ENCODE measurements at regions of chr5 and their contacts with region 1.

Region 1: GRCh38 chr5:103224118-103224893 is 34.3 kb upstream of the MACIR start:
- DNase-seq: peak; percentile 46 to 80 (median 66)
- ATAC-seq: peak; percentile 96
- H3K4me3 ChIP-seq: no peak overlapping the region
- H3K27ac ChIP-seq: no peak overlapping the region
- H3K4me1 ChIP-seq: peaks cover 3 to 5% of the 10 kb centered on the region in 2 experiments; a peak in 2 of 5 replicates
- H3K27me3 ChIP-seq: no peaks in the 10 kb centered on the region
- CTCF ChIP-seq: peak; percentile 68 to 84 (median 84)
- EP300 ChIP-seq: no peak
- POLR2A ChIP-seq: no peak
- RAD21 ChIP-seq: peak; percentile 72 to 87

Region 2: DNA sequence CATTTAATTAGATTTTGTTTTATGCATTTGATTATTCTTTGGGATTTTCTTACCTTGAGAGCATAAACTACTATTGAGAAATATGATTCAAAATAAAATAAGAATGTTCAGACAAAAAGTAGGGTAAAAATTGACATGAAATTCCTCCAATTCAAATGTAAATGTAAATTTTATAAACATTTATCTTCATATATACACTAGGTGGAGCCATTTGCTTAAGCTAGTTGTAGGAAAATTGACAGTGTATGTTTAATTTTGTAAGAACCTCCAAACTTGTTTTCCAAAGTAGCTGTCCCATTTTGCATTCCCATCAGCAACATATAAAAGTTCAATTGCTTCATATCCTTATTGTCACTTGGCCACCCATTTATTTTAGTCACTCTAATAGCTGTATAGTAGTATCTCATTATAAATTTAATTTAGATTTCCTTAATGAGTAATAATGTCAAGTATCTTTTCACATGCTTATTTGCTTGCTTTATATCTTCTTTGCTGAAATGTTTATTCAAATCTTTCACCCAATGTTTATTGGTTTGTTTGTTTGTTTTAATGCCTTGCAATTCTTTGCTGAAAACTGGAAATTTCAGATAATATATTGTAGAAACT is 687.9 kb before region 1 on chr5:
- CTCF ChIA-PET with region 1: no interaction called
- POLR2A ChIA-PET with region 1: interaction called, 3 read pairs
- in situ Hi-C with region 1: loop called (anchors 10 kb)
- intact Hi-C with region 1: loop called (anchors 1 kb)
- DNase-seq: no peak
- ATAC-seq: no peak
- H3K4me3 ChIP-seq: no peak overlapping the region
- H3K27ac ChIP-seq: no peak overlapping the region
- H3K4me1 ChIP-seq: no peaks in the 10 kb centered on the region
- H3K27me3 ChIP-seq: no peaks in the 10 kb centered on the region
- CTCF ChIP-seq: peak in 1 of 3 experiments; percentile 45; a peak in 2 of 6 replicates
- EP300 ChIP-seq: no peak
- POLR2A ChIP-seq: no peak
- RAD21 ChIP-seq: peak; percentile 42 to 47

Region 3: DNA sequence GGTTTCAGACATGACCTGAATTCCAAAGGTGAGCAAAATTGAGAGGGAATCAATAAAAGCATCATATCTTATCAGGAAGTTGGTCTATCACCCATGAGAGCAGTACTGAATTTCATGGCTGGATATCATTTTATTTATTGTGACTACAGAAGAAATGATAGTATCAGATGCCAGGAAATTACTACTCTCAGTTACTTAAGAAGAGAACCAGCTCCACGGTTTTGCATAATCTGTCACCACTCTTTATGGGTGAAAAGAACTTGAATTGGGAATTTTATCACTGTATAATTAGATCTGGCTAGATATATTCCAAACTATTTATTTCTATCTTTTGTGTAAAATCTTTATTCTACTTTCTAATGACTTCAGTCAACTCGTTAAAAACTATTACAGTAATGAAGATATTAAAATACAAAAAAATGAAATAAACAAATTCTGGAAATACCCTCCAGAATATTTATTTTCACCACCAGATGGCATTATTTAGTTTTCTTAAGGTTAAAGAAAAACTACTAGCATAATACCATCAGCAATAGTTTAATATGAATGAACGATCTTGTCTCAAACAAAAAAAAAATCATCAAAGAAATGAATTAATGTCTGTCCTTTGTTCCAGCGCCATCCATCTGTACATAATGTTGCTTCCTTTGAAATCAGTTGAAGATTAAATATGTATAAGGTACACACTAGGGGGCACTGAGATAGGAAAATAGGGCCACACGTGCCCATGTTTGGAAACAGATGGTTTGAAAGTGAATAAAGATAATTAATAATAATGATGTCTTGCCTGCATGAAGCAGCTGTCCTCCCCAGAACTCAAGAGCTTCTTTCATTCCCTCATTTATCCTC is 640.8 kb before region 1 on chr5:
- CTCF ChIA-PET with region 1: no interaction called
- POLR2A ChIA-PET with region 1: no interaction called
- in situ Hi-C with region 1: no loop called
- intact Hi-C with region 1: loop called (anchors 5 kb)
- DNase-seq: peak in 3 of 4 experiments; percentile 2 to 9 (median 7)
- ATAC-seq: no peak
- H3K4me3 ChIP-seq: no peak overlapping the region
- H3K27ac ChIP-seq: no peak overlapping the region
- H3K4me1 ChIP-seq: no peaks in the 10 kb centered on the region
- H3K27me3 ChIP-seq: no peaks in the 10 kb centered on the region
- CTCF ChIP-seq: peak; percentile 21 to 48 (median 48); a peak in 3 of 6 replicates
- EP300 ChIP-seq: no peak
- POLR2A ChIP-seq: no peak
- RAD21 ChIP-seq: peak; percentile 48 to 61

Region 4: GRCh38 chr5:102681407-102681983 is 542.8 kb before region 1 on chr5:
- CTCF ChIA-PET with region 1: no interaction called
- POLR2A ChIA-PET with region 1: no interaction called
- in situ Hi-C with region 1: no loop called
- intact Hi-C with region 1: loop called (anchors 1 kb)
- DNase-seq: peak; percentile 17 to 67 (median 37)
- ATAC-seq: peak; percentile 91
- H3K4me3 ChIP-seq: no peak overlapping the region
- H3K27ac ChIP-seq: no peak overlapping the region
- H3K4me1 ChIP-seq: no peaks in the 10 kb centered on the region
- H3K27me3 ChIP-seq: no peaks in the 10 kb centered on the region
- CTCF ChIP-seq: peak; percentile 61 to 74 (median 72)
- EP300 ChIP-seq: no peak
- POLR2A ChIP-seq: no peak
- RAD21 ChIP-seq: peak; percentile 63 to 72

Region 5: DNA sequence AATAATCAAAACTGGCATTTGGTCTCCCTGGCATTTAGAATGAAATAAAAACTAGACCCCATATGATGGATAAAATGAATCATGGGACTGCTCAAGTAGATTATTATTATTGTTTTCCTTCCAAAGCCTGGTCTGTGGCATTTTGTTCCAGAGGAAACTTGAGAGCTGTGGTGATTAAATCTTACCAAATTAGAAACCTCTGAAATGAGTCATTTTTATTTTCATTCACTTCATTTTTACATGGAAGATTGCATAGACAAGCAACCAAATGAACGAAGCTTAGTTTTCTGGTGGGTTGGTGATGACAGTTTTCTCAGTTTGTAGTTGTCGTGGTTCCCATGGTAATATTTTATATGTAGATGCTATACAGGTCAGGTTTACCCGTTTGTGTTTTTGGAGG is 445.8 kb before region 1 on chr5:
- CTCF ChIA-PET with region 1: interaction called, 3 read pairs
- POLR2A ChIA-PET with region 1: no interaction called
- in situ Hi-C with region 1: loop called (anchors 10 kb)
- intact Hi-C with region 1: loop called (anchors 1 kb)
- DNase-seq: no peak
- ATAC-seq: no peak
- H3K4me3 ChIP-seq: no peak overlapping the region
- H3K27ac ChIP-seq: no peak overlapping the region
- H3K4me1 ChIP-seq: no peaks in the 10 kb centered on the region
- H3K27me3 ChIP-seq: no peaks in the 10 kb centered on the region
- CTCF ChIP-seq: no peak
- EP300 ChIP-seq: no peak
- POLR2A ChIP-seq: no peak
- RAD21 ChIP-seq: no peak

Region 6: DNA sequence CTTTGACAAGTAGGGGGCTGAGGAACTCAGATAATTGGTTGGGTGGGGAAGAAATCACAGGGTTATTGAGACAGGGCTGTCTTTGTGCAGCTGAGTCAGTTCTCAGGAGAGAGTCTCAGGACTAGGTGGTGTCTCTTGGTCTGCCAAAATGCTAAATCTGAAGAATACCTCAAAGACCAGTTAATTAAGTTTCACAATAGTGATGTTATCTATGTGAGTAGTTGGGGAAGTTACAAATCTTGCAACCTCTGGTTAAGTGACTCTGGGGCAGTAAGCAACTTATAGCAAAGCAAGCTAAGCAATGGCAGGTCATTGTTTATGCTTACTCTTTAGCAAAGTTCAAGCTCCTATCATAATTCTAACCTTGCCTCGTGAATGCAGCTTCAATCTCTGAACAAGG is 158.0 kb before region 1 on chr5:
- CTCF ChIA-PET with region 1: interaction called, 3 read pairs
- POLR2A ChIA-PET with region 1: no interaction called
- in situ Hi-C with region 1: no loop called
- intact Hi-C with region 1: loop called (anchors 10 kb)
- DNase-seq: no peak
- ATAC-seq: no peak
- H3K4me3 ChIP-seq: no peak overlapping the region
- H3K27ac ChIP-seq: no peak overlapping the region
- H3K4me1 ChIP-seq: no peaks in the 10 kb centered on the region
- H3K27me3 ChIP-seq: no peaks in the 10 kb centered on the region
- CTCF ChIP-seq: no peak
- EP300 ChIP-seq: no peak
- POLR2A ChIP-seq: no peak
- RAD21 ChIP-seq: no peak

Region 7: GRCh38 chr5:103657301-103657700 is 433.0 kb after region 1 on chr5:
- CTCF ChIA-PET with region 1: no interaction called
- POLR2A ChIA-PET with region 1: no interaction called
- in situ Hi-C with region 1: no loop called
- intact Hi-C with region 1: no loop called
- DNase-seq: no peak
- ATAC-seq: no peak
- H3K4me3 ChIP-seq: no peak overlapping the region
- H3K27ac ChIP-seq: no peak overlapping the region
- H3K4me1 ChIP-seq: no peaks in the 10 kb centered on the region
- H3K27me3 ChIP-seq: no peaks in the 10 kb centered on the region
- CTCF ChIP-seq: no peak
- EP300 ChIP-seq: no peak
- POLR2A ChIP-seq: no peak
- RAD21 ChIP-seq: no peak